PC-9 (cell line): ENCODE measurements at regions of chr3 and their contacts with region 1.

Region 1: GRCh38 chr3:67384760-67385397 is 269.5 kb downstream of the SUCLG2 start:
- DNase-seq: no peak
- H3K4me3 ChIP-seq: no peak overlapping the region
- H3K27ac ChIP-seq: no peak overlapping the region
- H3K4me1 ChIP-seq: no peaks in the 10 kb centered on the region
- H3K27me3 ChIP-seq: no peaks in the 10 kb centered on the region
- CTCF ChIP-seq: peak; percentile 22; the same call in 1 of the 2 replicates

Region 2: DNA sequence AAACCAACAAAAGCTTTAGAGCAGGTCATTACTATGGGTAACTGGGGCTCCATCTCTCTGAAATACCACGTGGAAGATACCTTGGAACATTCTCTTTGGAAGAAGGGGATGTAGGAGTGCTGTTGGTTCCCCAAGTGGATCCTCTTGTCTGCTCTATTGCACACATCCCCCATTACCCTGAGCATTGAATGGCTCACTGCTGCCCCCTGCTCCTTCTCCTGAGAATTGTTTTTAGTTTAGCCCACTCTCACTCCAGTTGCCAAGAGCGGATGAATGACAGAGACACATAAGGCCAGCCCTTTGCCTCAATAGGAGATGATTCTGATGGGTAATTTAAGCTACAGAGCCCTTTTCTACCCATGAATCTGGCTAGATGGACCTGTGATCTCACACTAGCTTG is 405.2 kb after region 1 on chr3:
- CTCF ChIA-PET with region 1: no interaction called
- POLR2A ChIA-PET with region 1: no interaction called
- intact Hi-C with region 1: loop called (anchors 2 kb)
- DNase-seq: peak in 1 of 2 experiments; percentile 15
- H3K4me3 ChIP-seq: no peak overlapping the region
- H3K27ac ChIP-seq: no peak overlapping the region
- H3K4me1 ChIP-seq: no peaks in the 10 kb centered on the region
- H3K27me3 ChIP-seq: no peaks in the 10 kb centered on the region
- CTCF ChIP-seq: peak; percentile 63

Region 3: GRCh38 chr3:67863869-67864268 is 479.0 kb after region 1 on chr3:
- CTCF ChIA-PET with region 1: no interaction called
- POLR2A ChIA-PET with region 1: no interaction called
- intact Hi-C with region 1: loop called (anchors 2 kb)
- DNase-seq: no peak
- H3K4me3 ChIP-seq: no peak overlapping the region
- H3K27ac ChIP-seq: no peak overlapping the region
- H3K4me1 ChIP-seq: no peaks in the 10 kb centered on the region
- H3K27me3 ChIP-seq: no peaks in the 10 kb centered on the region
- CTCF ChIP-seq: peak; percentile 48; the same call in 1 of the 2 replicates